MCF 10A (cell line): ENCODE measurements at regions of chrX and their contacts with region 1.

Region 1: DNA sequence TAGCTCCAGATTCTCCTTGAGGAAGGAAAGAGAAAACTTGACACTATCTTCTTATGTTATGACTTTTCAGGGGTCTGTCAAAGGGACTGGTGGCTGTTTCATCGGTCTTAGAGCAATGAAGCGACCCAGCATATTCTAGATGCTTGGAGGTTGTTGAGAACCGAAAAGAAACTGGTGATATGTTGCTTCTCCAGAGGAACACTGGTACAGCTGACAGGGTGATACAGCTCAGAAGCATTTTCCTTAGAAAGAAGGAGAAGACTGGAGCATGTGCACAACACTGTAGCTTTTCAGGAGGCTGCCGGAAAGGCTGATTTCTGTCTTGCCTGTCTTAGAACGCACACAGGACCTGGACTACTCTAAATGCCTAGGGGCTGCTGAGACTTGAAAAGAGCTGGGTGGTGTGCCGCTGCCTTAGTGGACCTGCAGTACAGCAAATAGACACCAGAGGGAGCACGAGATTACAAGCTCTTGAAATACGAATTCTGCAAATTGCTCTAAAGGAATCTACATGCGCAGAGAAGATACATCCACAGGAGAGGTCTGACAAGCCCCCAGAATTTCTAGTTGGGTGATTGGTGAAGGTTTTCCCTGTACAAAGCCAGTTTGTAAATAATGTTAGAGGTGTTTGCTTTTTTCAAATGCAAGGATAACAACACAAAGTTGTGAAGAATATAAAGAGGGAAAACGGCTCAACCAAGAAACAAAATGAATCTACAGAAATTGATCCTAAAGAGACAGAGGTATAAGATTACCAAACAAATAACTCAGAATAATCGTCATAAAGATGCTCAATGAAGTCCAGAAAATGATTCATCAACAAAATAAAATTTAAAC is 223.1 kb upstream of the DMD start:
- DNase-seq: peak; percentile 71
- H3K4me3 Mint-ChIP-seq: no peak overlapping the region
- H3K27ac Mint-ChIP-seq: no peak overlapping the region
- H3K4me1 Mint-ChIP-seq: no peaks in the 10 kb centered on the region
- H3K27me3 Mint-ChIP-seq: no peaks in the 10 kb centered on the region
- CTCF ChIP-seq: peak; percentile 88

Region 2: DNA sequence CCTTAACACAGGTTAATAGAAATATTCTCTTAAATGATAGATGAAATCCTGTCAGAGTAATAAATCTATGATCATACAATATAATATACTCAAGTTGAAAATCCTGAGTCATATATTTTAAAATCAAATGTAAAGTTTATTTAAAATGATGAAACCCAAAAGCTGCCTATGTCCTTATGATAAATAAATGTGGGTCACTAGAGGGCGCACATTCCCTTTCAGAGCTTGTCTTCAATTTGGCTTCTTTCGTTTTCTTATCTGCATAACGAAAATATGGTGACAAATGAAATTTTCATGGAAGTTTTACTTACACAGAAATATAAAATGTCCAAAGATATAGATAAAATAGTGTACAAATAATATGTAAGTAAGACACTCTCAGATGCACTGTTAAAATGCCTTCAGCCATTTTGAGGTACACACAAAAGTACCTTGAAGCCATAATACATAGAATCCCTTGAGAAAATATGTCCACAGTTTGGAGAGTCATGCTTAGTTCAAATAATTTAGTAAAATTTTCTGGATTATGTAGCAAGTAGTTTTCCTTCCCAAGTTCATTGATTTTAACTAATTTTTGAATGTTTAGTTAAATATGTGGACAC is 903.6 kb before region 1 on chrX:
- CTCF ChIA-PET with region 1: no interaction called
- POLR2A ChIA-PET with region 1: no interaction called
- intact Hi-C with region 1: loop called (anchors 1 kb)
- DNase-seq: peak; percentile 66
- H3K4me3 Mint-ChIP-seq: peak overlapping the region; percentile 25
- H3K27ac Mint-ChIP-seq: no peak overlapping the region
- H3K4me1 Mint-ChIP-seq: no peaks in the 10 kb centered on the region
- H3K27me3 Mint-ChIP-seq: peaks cover 14% of the 10 kb centered on the region
- CTCF ChIP-seq: peak; percentile 52

Region 3: GRCh38 chrX:33607042-33607595 is 172.6 kb after region 1 on chrX:
- CTCF ChIA-PET with region 1: no interaction called
- POLR2A ChIA-PET with region 1: no interaction called
- intact Hi-C with region 1: no loop called
- DNase-seq: no peak
- H3K4me3 Mint-ChIP-seq: no peak overlapping the region
- H3K27ac Mint-ChIP-seq: no peak overlapping the region
- H3K4me1 Mint-ChIP-seq: no peaks in the 10 kb centered on the region
- H3K27me3 Mint-ChIP-seq: no peaks in the 10 kb centered on the region
- CTCF ChIP-seq: no peak

Region 4: GRCh38 chrX:34275699-34276098 is 841.2 kb after region 1 on chrX:
- CTCF ChIA-PET with region 1: interaction called, 61 read pairs
- POLR2A ChIA-PET with region 1: no interaction called
- intact Hi-C with region 1: loop called (anchors 1 kb)
- DNase-seq: peak; percentile 11
- H3K4me3 Mint-ChIP-seq: no peak overlapping the region
- H3K27ac Mint-ChIP-seq: no peak overlapping the region
- H3K4me1 Mint-ChIP-seq: no peaks in the 10 kb centered on the region
- H3K27me3 Mint-ChIP-seq: peaks cover 11% of the 10 kb centered on the region
- CTCF ChIP-seq: peak; percentile 41

Region 5: GRCh38 chrX:34300871-34301270 is 866.4 kb after region 1 on chrX:
- CTCF ChIA-PET with region 1: interaction called, 30 read pairs
- POLR2A ChIA-PET with region 1: no interaction called
- intact Hi-C with region 1: loop called (anchors 1 kb)
- DNase-seq: peak; percentile 62
- H3K4me3 Mint-ChIP-seq: no peak overlapping the region
- H3K27ac Mint-ChIP-seq: no peak overlapping the region
- H3K4me1 Mint-ChIP-seq: no peaks in the 10 kb centered on the region
- H3K27me3 Mint-ChIP-seq: peaks cover 26% of the 10 kb centered on the region
- CTCF ChIP-seq: peak; percentile 62